ENCODE measurements at regions of chr15 and their contacts with region 1.

Region 1: DNA sequence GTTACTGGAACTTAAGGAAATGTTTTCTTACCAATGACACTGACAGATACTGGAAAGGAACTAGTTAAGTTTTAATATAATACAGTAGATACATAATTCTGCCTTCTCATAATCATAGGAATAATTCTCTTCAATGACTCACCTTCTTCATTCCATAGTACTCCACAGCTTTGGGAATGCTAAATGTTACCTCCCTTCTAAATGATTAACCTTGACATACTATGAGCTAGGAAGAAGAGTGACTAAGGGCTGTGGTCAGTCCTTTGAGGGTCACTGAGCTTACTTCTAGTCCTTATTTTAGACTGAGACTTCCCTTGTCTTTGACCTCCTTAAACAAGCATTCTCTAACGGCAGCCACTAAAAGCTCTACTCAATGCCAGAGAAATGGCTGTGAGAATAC is 69.6 kb upstream of the PPIB start:
- DNase-seq: no peak
- H3K4me3 ChIP-seq: no peak overlapping the region
- H3K27ac ChIP-seq: no peak overlapping the region
- H3K4me1 ChIP-seq: no peaks in the 10 kb centered on the region
- H3K27me3 ChIP-seq: no peaks in the 10 kb centered on the region
- CTCF ChIP-seq: no peak
- EP300 ChIP-seq: no peak
- POLR2A ChIP-seq: no peak

Region 2: DNA sequence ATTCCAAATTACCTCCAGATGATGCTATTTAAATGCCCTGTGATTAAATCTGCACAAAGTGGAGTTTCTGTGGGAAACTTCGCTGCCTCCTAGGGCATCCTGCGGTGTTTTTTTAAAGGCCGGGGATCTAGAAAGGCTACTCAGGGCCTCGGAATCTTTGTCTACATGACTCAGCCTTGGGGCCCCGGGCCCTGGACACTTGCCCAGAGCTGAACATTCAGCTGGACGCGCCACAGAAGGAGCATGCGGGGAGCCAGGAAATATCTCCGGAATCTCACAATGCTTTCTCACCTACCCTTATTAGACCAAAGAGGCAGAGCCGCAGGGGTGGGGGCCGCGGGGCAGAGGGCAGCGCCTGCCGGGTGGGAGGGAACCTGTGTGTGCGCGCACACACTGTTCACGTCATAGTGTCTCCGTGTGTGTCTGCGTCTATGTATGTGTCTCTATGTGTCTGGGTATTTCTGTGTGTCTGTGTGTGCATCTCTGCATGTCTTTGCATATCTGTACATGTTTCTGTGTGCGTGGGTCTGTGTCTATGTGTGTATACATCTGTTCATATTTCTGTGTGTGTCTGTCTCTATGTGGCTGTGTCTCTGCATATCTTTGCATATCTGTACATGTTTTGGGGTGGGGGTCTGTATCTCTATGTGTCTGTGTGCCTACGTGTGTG is 1335.3 kb before region 1 on chr15:
- intact Hi-C with region 1: loop called in 1 of 4 experiments (anchors 10 kb)
- DNase-seq: peak; percentile 90 to 94 (median 92)
- H3K4me3 ChIP-seq: no peak overlapping the region
- H3K27ac ChIP-seq: no peak overlapping the region
- H3K4me1 ChIP-seq: peaks cover 5% of the 10 kb centered on the region
- H3K27me3 ChIP-seq: no peaks in the 10 kb centered on the region
- CTCF ChIP-seq: no peak
- EP300 ChIP-seq: no peak
- POLR2A ChIP-seq: no peak